Heart left ventricle (tissue), 16 donors: ENCODE measurements at regions of chr22 and their contacts with region 1.

Region 1: DNA sequence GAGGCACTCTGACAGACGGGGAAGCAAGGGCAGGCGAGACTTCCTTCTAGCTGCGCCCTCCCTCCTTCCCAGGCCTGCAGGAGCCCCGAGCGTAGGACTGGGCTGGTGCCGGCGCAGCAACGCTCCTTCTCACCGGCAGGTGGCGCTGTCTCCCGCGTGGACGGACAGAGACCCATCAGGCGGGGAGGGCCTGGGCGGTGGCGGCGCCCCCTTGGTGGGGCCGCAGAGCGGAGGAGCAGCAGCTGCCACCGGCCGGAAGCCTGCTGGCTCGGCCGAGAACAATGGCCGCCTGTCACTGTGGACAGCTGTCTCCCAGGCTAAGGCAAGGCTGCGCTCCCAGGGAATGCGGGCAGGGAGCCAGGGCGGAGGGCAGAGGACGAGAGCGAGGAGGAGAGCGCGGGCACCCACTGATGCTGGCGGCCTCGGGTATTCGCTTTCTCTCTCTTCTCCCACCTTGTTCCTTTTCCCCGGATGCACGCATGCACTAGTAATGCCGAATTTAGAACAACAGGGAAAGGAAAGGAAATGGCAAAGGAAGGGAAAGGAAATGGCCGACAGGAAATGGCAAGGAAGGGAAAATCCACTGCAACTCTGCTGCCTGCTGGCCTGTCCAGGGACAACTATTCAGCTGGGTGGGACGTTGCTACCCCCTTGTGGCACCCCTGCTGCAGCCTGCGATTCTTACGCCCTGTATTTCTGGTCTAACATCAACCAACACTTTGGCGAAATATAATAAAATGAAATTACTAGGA is 14.4 kb downstream of the PPM1F start:
- DNase-seq: peak; percentile 93 to 98 (median 95)
- ATAC-seq: peak; percentile 81 to 91 (median 86)
- H3K4me3 ChIP-seq: peak overlapping the region; percentile 9 to 67 (median 61)
- H3K27ac ChIP-seq: peak overlapping the region; percentile 88 to 98 (median 96)
- H3K4me1 ChIP-seq: peaks cover 34 to 82% (median 72%) of the 10 kb centered on the region in 12 donors
- H3K27me3 ChIP-seq: no peaks in the 10 kb centered on the region
- CTCF ChIP-seq: peak; percentile 89 to 100 (median 96)
- POLR2A ChIP-seq: peak in 1 of 2 donors; percentile 64

Region 2: DNA sequence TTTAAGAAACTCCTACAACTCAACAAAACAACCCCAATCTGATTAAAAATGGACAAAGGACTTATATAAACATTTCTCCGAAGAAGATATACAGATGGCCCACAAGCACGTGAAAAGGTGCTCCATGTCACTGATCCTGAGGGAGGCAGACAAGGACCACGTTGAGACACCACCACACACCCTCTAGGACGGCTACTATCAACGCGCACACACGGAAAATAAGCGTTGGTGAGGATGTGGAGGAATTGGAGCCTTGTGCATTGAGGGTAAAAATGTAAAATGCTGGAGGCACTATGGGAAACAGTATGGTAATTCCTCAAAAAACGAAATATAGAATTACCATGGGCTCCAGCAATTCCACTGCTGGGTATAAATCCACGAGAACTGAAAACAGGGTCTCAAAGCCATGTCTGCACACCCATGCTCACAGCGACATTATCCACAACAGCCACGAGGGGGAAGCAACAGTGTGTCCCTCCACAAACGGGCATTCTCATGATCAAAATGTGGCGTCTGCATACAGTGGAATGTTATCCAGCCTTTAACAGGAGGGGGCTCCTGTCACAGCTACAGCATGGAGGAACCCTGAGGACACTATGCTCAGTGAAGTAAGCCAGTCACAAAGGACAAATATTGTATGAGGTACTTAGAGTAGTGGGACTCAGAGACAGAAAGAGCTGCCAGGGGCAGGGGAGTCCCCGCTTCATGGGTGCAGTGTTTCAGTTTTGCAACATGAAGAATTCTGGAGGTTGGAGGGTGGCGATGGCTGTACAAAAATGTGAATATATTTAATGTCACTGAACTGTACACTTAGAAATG is 225.1 kb before region 1 on chr22:
- intact Hi-C with region 1: loop called (anchors 1 to 5 kb)
- DNase-seq: peak in 4 of 5 donors; percentile 66 to 71 (median 69)
- ATAC-seq: peak; percentile 84 to 94 (median 92)
- H3K4me3 ChIP-seq: peak overlapping the region in 6 of 12 donors; percentile 5 to 37 (median 20)
- H3K27ac ChIP-seq: peak overlapping the region in 2 of 12 donors; percentile 0 to 49
- H3K4me1 ChIP-seq: peaks cover 0 to 22% (median 11%) of the 10 kb centered on the region in 12 donors
- H3K27me3 ChIP-seq: no peaks in the 10 kb centered on the region
- CTCF ChIP-seq: peak; percentile 70 to 85 (median 77)
- POLR2A ChIP-seq: no peak

Region 3: GRCh38 chr22:21771631-21771976 is 166.6 kb before region 1 on chr22:
- intact Hi-C with region 1: loop called in 6 of 10 experiments (anchors 2 to 10 kb)
- DNase-seq: no peak
- ATAC-seq: no peak
- H3K4me3 ChIP-seq: no peak overlapping the region
- H3K27ac ChIP-seq: no peak overlapping the region
- H3K4me1 ChIP-seq: peaks cover 0 to 17% (median 4%) of the 10 kb centered on the region in 12 donors
- H3K27me3 ChIP-seq: no peaks in the 10 kb centered on the region
- CTCF ChIP-seq: no peak
- POLR2A ChIP-seq: no peak

Region 4: GRCh38 chr22:21791635-21792625 is 146.3 kb before region 1 on chr22:
- intact Hi-C with region 1: loop called in 1 of 10 experiments (anchors 5 kb)
- DNase-seq: no peak
- ATAC-seq: no peak
- H3K4me3 ChIP-seq: no peak overlapping the region
- H3K27ac ChIP-seq: no peak overlapping the region
- H3K4me1 ChIP-seq: peaks cover 0 to 7% (median under 1%) of the 10 kb centered on the region in 12 donors
- H3K27me3 ChIP-seq: no peaks in the 10 kb centered on the region
- CTCF ChIP-seq: no peak
- POLR2A ChIP-seq: no peak

Region 5: DNA sequence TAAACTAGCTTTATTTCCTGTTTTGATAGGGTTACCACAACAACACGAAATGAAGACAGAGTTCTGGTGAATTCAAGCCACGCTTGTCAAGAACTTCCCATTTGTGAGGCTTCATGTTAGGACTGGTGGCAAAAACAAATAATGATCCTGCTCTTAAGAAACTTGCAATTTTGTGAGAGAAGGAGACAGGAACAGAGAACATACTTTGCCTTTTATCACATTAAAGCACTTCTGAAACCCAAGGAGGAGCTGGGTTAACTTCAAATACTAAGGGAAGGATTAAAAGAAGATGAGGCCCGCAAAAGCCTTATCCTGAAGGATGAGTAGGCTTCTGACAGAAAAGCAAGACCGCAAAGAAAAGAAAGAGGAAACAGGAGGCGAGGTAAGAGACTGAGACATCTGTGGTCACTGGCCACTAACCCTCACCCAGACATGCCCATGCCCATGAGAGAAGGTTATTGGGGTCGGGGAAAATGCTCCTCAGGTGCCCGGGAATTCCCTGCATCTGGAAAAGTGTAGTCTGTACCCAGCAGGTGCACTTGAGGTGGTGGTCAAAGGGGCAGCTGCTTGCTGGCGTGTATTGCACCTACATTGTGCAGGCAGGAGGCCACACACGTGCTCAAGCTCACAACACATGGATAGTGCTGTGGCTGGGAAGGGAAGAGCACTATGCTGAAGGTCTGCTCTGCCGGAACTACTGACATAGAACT is 121.3 kb before region 1 on chr22:
- intact Hi-C with region 1: no loop called
- DNase-seq: no peak
- ATAC-seq: peak; percentile 62 to 92 (median 88)
- H3K4me3 ChIP-seq: peak overlapping the region in 4 of 12 donors; percentile 2 to 29 (median 3)
- H3K27ac ChIP-seq: peak overlapping the region in 10 of 12 donors; percentile 28 to 90 (median 59)
- H3K4me1 ChIP-seq: peaks cover 5 to 56% (median 36%) of the 10 kb centered on the region in 12 donors
- H3K27me3 ChIP-seq: no peaks in the 10 kb centered on the region
- CTCF ChIP-seq: no peak
- POLR2A ChIP-seq: no peak

Region 6: DNA sequence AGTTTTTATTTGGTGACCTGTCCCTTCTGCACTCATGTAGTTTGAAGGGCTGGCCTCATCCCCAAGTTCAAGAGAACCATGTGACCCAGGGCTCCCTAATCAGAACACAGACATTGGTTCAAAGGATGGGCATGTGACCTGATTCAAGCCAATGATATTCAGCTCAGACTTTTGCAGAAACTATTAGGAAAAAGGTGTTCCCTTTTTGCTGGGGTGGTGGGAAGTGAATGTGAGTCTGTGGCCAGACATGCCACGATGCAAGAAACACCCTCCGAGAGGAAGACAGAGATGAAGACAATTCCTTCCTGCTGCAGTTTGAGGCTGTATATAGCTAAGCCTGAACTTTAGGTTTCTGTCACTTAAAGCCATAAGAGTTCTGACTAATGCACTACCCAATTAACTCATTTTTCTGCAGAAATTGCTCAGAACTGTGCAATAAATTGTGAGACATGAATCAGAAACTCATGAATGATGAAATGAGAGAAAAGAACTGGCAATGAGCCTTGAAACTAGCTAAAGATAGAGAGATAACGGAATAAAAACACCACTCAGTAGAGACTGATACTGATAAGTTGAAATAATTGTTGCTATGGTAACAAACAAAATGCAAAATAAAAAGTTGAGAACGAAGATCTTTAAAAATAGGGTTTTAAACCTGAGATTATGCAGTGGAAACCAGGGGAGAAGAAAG is 61.6 kb before region 1 on chr22:
- intact Hi-C with region 1: loop called in 1 of 10 experiments (anchors 5 kb)
- DNase-seq: no peak
- ATAC-seq: no peak
- H3K4me3 ChIP-seq: no peak overlapping the region
- H3K27ac ChIP-seq: no peak overlapping the region
- H3K4me1 ChIP-seq: peaks cover 0 to 9% (median 0%) of the 10 kb centered on the region in 12 donors
- H3K27me3 ChIP-seq: no peaks in the 10 kb centered on the region
- CTCF ChIP-seq: no peak
- POLR2A ChIP-seq: no peak

Region 7: GRCh38 chr22:21982338-21982965 is 44.2 kb after region 1 on chr22 and contains the start of gene TOP3B:
- intact Hi-C with region 1: loop called in 1 of 10 experiments (anchors 5 kb)
- DNase-seq: peak; percentile 82 to 93 (median 85)
- ATAC-seq: peak; percentile 76 to 93 (median 90)
- H3K4me3 ChIP-seq: peak within 1 kb of the TSS; percentile 67 to 99 (median 88)
- H3K27ac ChIP-seq: peak within 1 kb of the TSS; percentile 55 to 93 (median 82)
- H3K4me1 ChIP-seq: peaks cover 0 to 23% (median 14%) of the 10 kb centered on the region in 12 donors
- H3K27me3 ChIP-seq: no peaks in the 10 kb centered on the region
- CTCF ChIP-seq: no peak
- POLR2A ChIP-seq: peak in 1 of 2 donors; percentile 66
- total RNA-seq, gene TOP3B: 9.6 to 12.9 (median 11.2) TPM